K562 (cell line): ENCODE measurements at regions of chr18 and their contacts with region 1.

Region 1: GRCh38 chr18:22933206-22933957 is at the start of gene RBBP8:
- DNase-seq: peak; percentile 88 to 93 (median 88)
- ATAC-seq: peak; percentile 87
- H3K4me3 ChIP-seq: peak within 1 kb of the TSS; percentile 79
- H3K27ac ChIP-seq: peak within 1 kb of the TSS; percentile 86
- H3K4me1 ChIP-seq: peaks cover 5 to 16% of the 10 kb centered on the region in 2 experiments; a peak in 3 of 5 replicates
- H3K27me3 ChIP-seq: no peaks in the 10 kb centered on the region
- CTCF ChIP-seq: no peak
- EP300 ChIP-seq: no peak
- POLR2A ChIP-seq: peak; percentile 92
- RAD21 ChIP-seq: no peak
- polyA plus RNA-seq, gene RBBP8: 28.4 to 45.6 TPM

Region 2: GRCh38 chr18:22609642-22610041 is 323.7 kb before region 1 on chr18:
- CTCF ChIA-PET with region 1: no interaction called
- POLR2A ChIA-PET with region 1: no interaction called
- in situ Hi-C with region 1: no loop called
- intact Hi-C with region 1: no loop called
- DNase-seq: peak in 1 of 4 experiments; percentile 15
- ATAC-seq: no peak
- H3K4me3 ChIP-seq: no peak overlapping the region
- H3K27ac ChIP-seq: no peak overlapping the region
- H3K4me1 ChIP-seq: no peaks in the 10 kb centered on the region
- H3K27me3 ChIP-seq: peaks cover 22 to 26% of the 10 kb centered on the region in 2 experiments
- CTCF ChIP-seq: no peak
- EP300 ChIP-seq: no peak
- POLR2A ChIP-seq: no peak
- RAD21 ChIP-seq: no peak

Region 3: DNA sequence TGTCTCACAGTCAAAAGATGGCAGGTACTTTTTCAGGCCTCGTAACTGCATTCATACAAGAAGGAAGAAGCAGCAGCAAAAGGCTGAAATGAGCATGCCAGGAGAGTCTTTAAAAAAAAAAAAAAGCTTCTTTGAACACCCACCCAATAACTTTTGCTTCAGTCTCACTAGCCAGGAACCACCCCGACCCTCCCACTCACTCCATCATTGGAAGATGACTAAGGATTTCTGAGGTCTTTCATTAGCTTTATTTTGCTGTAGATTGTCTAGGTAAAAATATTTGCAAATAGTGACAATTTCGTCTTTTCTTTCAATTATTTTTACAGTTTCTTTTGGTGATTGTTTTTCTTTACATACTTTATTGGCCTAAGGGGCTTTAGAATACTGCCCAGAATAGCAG is 37.7 kb after region 1 on chr18:
- CTCF ChIA-PET with region 1: no interaction called
- POLR2A ChIA-PET with region 1: interaction called, 4 read pairs
- in situ Hi-C with region 1: no loop called
- intact Hi-C with region 1: loop called (anchors 5 kb)
- DNase-seq: peak in 3 of 4 experiments; percentile 16 to 62 (median 59)
- ATAC-seq: peak; percentile 83
- H3K4me3 ChIP-seq: no peak overlapping the region
- H3K27ac ChIP-seq: peak overlapping the region; percentile 32; the same call in 2 of the 3 replicates
- H3K4me1 ChIP-seq: peaks cover 0 to 6% of the 10 kb centered on the region in 2 experiments; a peak in 2 of 5 replicates
- H3K27me3 ChIP-seq: no peaks in the 10 kb centered on the region
- CTCF ChIP-seq: no peak
- EP300 ChIP-seq: 0 out of 2 replicates have a peak, but pooled peaks have one; percentile 5
- POLR2A ChIP-seq: no peak
- RAD21 ChIP-seq: no peak

Region 4: DNA sequence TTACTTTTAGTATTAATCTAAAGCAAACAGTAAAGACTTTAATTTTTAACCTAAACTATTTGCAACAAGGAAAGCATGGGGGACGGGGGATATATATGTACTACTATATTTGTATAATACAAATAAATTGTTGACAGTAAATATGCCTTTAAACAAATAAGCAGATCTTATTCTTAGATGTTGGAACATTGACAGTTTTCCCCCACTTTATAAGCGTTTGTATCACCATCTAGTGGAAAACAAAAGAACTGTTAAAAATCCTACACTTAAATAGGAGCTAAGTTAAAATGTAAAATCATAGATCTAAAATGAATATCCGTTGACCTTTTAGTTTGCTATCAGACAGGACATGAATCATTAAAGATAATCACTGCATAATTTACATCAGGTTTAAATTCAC is 49.8 kb after region 1 on chr18:
- CTCF ChIA-PET with region 1: interaction called, 17 read pairs
- POLR2A ChIA-PET with region 1: no interaction called
- in situ Hi-C with region 1: no loop called
- intact Hi-C with region 1: no loop called
- DNase-seq: peak in 2 of 4 experiments; percentile 18 to 19
- ATAC-seq: peak; percentile 59; the same call in 1 of the 3 replicates
- H3K4me3 ChIP-seq: no peak overlapping the region
- H3K27ac ChIP-seq: no peak overlapping the region
- H3K4me1 ChIP-seq: no peaks in the 10 kb centered on the region
- H3K27me3 ChIP-seq: no peaks in the 10 kb centered on the region
- CTCF ChIP-seq: peak in 2 of 3 experiments; percentile 35 to 71; a peak in 3 of 6 replicates
- EP300 ChIP-seq: no peak
- POLR2A ChIP-seq: no peak
- RAD21 ChIP-seq: peak; percentile 78

Region 5: GRCh38 chr18:23071285-23071684 is 137.9 kb after region 1 on chr18:
- CTCF ChIA-PET with region 1: no interaction called
- POLR2A ChIA-PET with region 1: no interaction called
- in situ Hi-C with region 1: no loop called
- intact Hi-C with region 1: loop called (anchors 10 kb)
- DNase-seq: no peak
- ATAC-seq: no peak
- H3K4me3 ChIP-seq: no peak overlapping the region
- H3K27ac ChIP-seq: no peak overlapping the region
- H3K4me1 ChIP-seq: no peaks in the 10 kb centered on the region
- H3K27me3 ChIP-seq: peaks cover 30 to 55% of the 10 kb centered on the region in 2 experiments; a peak in 4 of 5 replicates
- CTCF ChIP-seq: no peak
- EP300 ChIP-seq: no peak
- POLR2A ChIP-seq: no peak
- RAD21 ChIP-seq: no peak